PC-3 (cell line): ENCODE measurements at regions of chr1 and their contacts with region 1.

Region 1: DNA sequence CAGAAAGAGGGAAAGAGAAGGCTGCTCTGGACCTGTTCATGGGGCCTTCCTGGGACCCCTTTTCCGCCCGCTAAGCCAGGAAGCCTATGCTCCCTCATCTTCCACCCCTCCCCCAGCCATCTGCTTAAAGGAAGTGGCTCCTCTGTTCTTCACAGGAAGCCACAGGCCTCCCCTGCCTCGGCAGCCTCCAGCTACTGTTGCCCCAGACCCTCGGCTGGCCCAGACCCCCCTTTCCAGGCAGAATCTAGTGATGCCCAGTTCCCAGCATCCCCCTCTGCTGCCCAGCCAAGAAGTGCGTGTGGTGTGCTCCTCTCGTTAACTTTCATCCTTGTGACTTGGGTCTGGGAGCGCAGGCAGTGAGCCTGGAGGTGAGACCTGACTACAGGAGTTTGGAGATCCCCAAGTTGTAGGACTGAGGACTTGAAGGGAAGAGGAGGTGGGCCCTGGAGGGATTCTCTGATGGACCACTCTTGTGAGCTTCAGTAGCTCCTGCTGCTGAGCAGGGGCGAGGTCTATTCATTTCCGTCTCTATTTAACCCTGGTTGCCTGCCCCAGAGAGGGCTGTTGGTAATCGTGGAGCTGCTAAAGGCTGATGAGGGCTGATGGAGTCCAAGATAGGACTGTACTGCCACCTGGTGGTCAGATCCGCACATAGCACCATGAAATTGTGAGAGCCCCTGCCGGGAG is 9.1 kb downstream of the IFI6 start:
- DNase-seq: peak; percentile 93
- ATAC-seq: peak; percentile 69
- H3K4me3 ChIP-seq: no peak overlapping the region
- H3K27ac ChIP-seq: no peak overlapping the region
- H3K4me1 ChIP-seq: peaks cover 17% of the 10 kb centered on the region
- H3K27me3 ChIP-seq: no peaks in the 10 kb centered on the region
- CTCF ChIP-seq: peak; percentile 89

Region 2: GRCh38 chr1:27267153-27267552 is 395.7 kb before region 1 on chr1:
- CTCF ChIA-PET with region 1: no interaction called
- POLR2A ChIA-PET with region 1: no interaction called
- intact Hi-C with region 1: no loop called
- DNase-seq: no peak
- ATAC-seq: no peak
- H3K4me3 ChIP-seq: no peak overlapping the region
- H3K27ac ChIP-seq: no peak overlapping the region
- H3K4me1 ChIP-seq: no peaks in the 10 kb centered on the region
- H3K27me3 ChIP-seq: no peaks in the 10 kb centered on the region
- CTCF ChIP-seq: no peak

Region 3: GRCh38 chr1:27402349-27402754 is 260.5 kb before region 1 on chr1:
- CTCF ChIA-PET with region 1: no interaction called
- POLR2A ChIA-PET with region 1: no interaction called
- intact Hi-C with region 1: loop called (anchors 5 kb)
- DNase-seq: peak; percentile 53
- ATAC-seq: peak; percentile 17
- H3K4me3 ChIP-seq: no peak overlapping the region
- H3K27ac ChIP-seq: no peak overlapping the region
- H3K4me1 ChIP-seq: peaks cover 3% of the 10 kb centered on the region; the same call in 1 of the 2 replicates
- H3K27me3 ChIP-seq: no peaks in the 10 kb centered on the region
- CTCF ChIP-seq: peak; percentile 57

Region 4: DNA sequence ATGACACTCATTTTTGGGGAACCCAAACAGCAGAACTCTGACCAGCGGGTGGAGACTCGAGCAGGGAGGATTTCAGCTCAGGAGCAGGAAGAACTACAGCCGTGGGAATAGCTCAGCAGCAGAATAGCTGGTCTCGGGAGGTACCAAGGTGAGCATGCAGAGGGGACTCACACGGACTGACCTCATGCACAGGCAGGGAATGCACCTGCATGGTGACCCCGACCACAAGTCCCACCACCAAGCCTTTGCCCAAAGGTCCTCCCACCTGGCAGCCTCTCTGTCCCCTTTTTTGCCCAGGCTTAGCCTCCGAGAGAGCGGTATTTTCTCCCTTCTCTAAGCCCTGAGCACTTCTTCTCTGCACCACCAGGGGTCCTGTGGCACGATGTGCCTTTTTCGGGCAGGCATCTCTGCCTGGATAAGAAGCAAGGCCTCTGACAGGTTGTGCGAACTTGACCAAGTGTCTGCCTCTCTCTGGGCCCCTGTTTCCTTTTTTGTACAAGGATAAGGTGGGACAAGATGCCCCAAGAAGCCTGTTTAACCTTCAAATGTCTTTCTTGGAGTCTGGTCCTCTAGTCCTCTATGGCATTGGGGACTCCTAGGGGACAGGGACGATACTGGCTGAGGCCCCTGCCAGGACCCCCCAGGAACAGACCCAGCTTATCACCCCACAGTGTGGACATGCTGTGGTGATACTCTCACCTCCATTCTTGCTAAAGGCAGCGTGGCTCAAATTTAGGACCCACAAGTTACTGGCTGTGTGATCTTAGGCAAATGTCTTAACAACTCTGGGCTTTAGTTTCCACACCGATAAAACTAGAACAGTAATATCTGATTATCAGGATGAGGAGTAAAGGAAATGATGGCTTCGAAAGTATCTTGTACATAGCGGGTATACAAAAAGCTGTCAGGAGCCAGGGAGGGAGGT is 18.9 kb before region 1 on chr1:
- CTCF ChIA-PET with region 1: interaction called, 3 read pairs
- POLR2A ChIA-PET with region 1: no interaction called
- intact Hi-C with region 1: loop called (anchors 1 kb)
- DNase-seq: peak; percentile 59
- ATAC-seq: peak; percentile 80
- H3K4me3 ChIP-seq: no peak overlapping the region
- H3K27ac ChIP-seq: no peak overlapping the region
- H3K4me1 ChIP-seq: no peaks in the 10 kb centered on the region
- H3K27me3 ChIP-seq: no peaks in the 10 kb centered on the region
- CTCF ChIP-seq: peak; percentile 80

Region 5: GRCh38 chr1:27772933-27773825 is 110.3 kb after region 1 on chr1 and contains the start of gene STX12:
- CTCF ChIA-PET with region 1: interaction called, 16 read pairs
- POLR2A ChIA-PET with region 1: no interaction called
- intact Hi-C with region 1: no loop called
- DNase-seq: peak; percentile 99
- ATAC-seq: peak; percentile 95
- H3K4me3 ChIP-seq: peak within 1 kb of the TSS; percentile 79
- H3K27ac ChIP-seq: no peak within 1 kb of the TSS
- H3K4me1 ChIP-seq: peaks cover 19% of the 10 kb centered on the region
- H3K27me3 ChIP-seq: no peaks in the 10 kb centered on the region
- CTCF ChIP-seq: no peak
- total RNA-seq, gene STX12: 18.6 and 28.5 TPM in 2 replicates